Lower leg skin (tissue), 4 donors: ENCODE measurements at regions of chr6 and their contacts with region 1.

Region 1: DNA sequence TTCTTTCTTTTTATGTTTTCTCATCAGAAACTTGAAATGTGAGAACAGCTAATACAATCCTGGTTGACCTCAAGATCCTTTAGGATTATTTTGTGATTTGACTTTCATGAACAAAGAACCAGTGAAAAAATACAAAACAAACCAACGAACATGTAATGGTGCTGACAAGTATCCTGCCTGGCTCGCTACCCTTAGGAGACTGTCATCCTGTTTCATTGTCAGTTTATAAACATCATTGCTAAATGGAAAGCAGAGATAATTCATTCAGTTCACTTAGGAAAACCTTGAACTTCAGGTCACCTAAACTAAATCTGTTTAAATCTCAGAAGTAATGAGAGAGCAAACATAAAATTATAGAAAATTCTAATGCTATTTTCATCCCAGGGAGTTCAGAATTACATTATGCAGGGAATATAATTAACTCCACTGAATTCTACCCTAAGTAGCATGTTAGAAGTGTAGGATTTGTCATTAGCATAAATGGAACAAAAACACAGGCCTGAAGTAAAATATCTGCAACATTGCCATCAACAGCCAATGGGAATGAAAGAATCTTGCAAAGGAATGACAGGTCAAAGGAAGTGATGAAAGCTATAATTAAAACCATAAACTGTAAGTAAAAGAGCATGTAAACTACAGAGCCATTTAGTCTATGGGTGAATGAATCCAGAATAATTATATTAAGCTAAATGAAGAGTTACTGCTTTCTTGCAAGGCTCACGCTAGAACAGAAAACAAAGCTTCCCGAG is 401.2 kb upstream of the MANEA start:
- DNase-seq: no peak
- H3K4me3 ChIP-seq: no peak overlapping the region
- CTCF ChIP-seq: no peak
- POLR2A ChIP-seq: no peak

Region 2: DNA sequence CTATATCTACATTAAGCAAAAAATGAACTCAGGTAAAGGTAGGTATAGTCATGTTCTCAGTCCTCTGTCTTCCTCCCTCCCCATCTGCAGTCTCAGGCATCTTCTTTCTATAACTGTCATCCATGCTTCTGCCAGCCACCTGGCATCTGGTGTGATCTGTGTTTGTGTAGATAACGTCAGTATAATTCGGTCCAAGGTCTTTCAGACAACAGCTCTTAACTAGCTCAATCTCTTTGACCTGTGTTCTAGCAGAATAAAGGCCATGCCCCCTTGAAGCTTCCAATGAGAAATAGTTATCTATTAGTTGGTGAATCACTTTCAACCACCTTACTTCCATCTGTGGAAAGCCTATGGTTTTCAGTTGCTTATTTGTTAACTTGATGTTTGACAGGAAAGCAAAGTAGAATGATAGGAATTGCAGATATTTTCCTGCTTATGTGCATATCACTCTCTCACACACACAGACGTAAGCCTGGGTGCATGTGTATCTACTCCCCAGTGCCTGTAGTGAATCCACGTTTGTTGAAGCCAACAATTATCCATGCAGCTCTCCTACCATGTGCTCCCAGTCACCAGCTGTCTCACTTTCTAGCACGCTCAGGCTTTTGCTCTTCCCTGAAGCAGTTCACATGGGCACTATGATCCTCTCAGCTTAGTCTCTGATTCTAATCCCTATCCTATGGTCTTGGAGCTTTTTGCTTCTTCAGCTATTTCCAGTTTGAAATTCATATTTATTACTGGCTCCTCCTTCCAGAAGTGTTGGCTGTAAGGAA is 32.5 kb before region 1 on chr6:
- intact Hi-C with region 1: no loop called
- DNase-seq: no peak
- H3K4me3 ChIP-seq: peak overlapping the region; percentile 2
- CTCF ChIP-seq: no peak
- POLR2A ChIP-seq: no peak

Region 3: GRCh38 chr6:95404777-95405176 is 228.7 kb after region 1 on chr6:
- intact Hi-C with region 1: loop called (anchors 5 kb)
- DNase-seq: no peak
- H3K4me3 ChIP-seq: no peak overlapping the region
- CTCF ChIP-seq: no peak
- POLR2A ChIP-seq: no peak

Region 4: DNA sequence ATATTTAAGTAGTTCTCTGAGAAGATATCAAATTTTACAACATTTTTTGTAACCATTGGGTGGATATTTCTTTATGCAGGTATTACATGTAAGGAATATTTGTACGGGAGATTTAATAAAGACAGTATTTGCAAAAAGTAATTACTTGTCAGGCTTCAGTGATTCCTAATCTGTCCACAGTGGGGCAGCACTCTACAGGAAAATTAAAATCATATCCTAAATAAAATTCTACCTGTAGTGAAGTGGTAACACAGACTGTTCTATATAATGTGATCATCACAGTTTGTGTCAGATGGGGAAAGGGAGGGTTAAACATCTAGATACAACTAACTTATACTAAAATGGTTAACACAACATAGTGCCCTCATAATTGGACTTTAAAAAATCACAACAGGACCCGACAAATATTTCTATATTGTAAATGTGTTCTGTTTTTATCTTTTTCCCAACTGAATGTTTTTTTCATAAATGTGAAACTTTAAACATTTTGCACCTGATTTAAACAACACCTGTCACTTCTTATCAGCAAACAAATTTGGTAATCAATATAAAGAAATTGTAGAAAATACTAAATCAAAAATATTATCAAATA is 255.6 kb after region 1 on chr6:
- intact Hi-C with region 1: no loop called
- DNase-seq: peak in 1 of 2 donors; percentile 32
- H3K4me3 ChIP-seq: no peak overlapping the region
- CTCF ChIP-seq: no peak
- POLR2A ChIP-seq: no peak